ENCODE measurements at regions of chr1 and their contacts with region 1.

Region 1: DNA sequence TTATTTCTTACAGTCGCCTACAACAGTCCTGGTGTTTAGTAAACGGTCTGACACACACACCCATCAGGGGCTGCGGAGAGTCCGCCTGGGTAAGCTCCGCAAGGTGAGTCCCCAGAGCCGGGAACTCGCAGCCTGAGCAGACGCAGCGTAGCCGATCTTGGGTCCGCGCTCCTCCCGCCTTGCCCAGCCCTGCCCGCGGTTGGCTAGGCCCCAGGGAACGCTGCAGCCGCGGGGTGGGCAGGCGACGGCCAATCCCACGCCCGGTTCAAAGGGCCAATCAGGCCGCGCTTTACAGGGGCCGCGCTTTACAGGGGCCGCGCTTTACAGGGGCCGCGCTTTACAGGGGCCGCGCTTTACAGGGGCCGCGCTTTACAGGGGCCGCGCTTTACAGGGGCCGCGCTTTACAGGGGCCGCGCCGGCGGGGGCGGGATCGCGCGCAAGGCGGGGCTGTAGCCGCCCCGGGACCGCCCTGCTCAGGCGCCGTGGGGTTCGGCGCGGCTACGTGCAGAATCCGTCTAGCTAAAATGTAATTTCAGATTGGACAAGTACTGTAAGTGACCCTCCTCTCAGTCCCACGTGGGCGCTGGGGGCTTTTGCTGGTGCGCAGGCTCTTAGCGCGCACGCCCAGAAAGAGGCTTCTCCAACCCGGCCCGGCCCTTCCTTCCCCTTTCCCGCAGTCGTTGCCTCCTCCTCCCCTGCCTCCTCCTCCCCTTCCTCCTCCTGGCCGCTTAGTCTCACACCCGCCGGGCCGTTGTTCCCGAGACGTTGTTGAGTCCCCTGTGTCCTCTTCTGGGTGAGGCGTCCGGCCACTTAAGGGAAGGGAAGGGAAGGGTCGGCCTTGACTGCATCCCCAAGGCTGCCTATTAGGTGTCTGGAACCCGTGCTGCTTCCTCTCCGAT is at the start of gene FGGY:
- DNase-seq: peak; percentile 99
- H3K4me3 ChIP-seq: peak within 1 kb of the TSS; percentile 57 to 68 (median 63)
- H3K27ac ChIP-seq: peak within 1 kb of the TSS; percentile 92 to 98 (median 96)
- H3K4me1 ChIP-seq: peaks cover 18 to 31% (median 28%) of the 10 kb centered on the region in 4 donors
- H3K27me3 ChIP-seq: no peaks in the 10 kb centered on the region
- CTCF ChIP-seq: peak in 1 of 3 experiments; percentile 5
- EP300 ChIP-seq: no peak
- POLR2A ChIP-seq: peak; percentile 88
- total RNA-seq, gene FGGY: 23.3 to 26.4 (median 25.3) TPM

Region 2: GRCh38 chr1:58783993-58784757 is 512.4 kb before region 1 on chr1 and contains the start of gene JUN:
- intact Hi-C with region 1: loop called (anchors 5 kb)
- DNase-seq: peak; percentile 100
- H3K4me3 ChIP-seq: peak within 1 kb of the TSS; percentile 79 to 93 (median 91)
- H3K27ac ChIP-seq: peak within 1 kb of the TSS; percentile 98 to 100 (median 100)
- H3K4me1 ChIP-seq: peaks cover 17 to 30% (median 28%) of the 10 kb centered on the region in 4 donors
- H3K27me3 ChIP-seq: no peaks in the 10 kb centered on the region
- CTCF ChIP-seq: peak in 2 of 3 experiments; percentile 24
- EP300 ChIP-seq: peak; percentile 14
- POLR2A ChIP-seq: peak; percentile 95
- total RNA-seq, gene JUN: 77.7 to 126 (median 111) TPM

Region 3: GRCh38 chr1:58816072-58816746 is 480.4 kb before region 1 on chr1:
- intact Hi-C with region 1: loop called (anchors 10 kb)
- DNase-seq: peak; percentile 95
- H3K4me3 ChIP-seq: peak overlapping the region; percentile 65 to 73 (median 68)
- H3K27ac ChIP-seq: peak overlapping the region; percentile 91 to 96 (median 94)
- H3K4me1 ChIP-seq: peaks cover 27 to 37% (median 34%) of the 10 kb centered on the region in 4 donors
- H3K27me3 ChIP-seq: no peaks in the 10 kb centered on the region
- CTCF ChIP-seq: peak in 2 of 3 experiments; percentile 8 to 22
- EP300 ChIP-seq: peak; percentile 6
- POLR2A ChIP-seq: peak; percentile 26

Region 4: DNA sequence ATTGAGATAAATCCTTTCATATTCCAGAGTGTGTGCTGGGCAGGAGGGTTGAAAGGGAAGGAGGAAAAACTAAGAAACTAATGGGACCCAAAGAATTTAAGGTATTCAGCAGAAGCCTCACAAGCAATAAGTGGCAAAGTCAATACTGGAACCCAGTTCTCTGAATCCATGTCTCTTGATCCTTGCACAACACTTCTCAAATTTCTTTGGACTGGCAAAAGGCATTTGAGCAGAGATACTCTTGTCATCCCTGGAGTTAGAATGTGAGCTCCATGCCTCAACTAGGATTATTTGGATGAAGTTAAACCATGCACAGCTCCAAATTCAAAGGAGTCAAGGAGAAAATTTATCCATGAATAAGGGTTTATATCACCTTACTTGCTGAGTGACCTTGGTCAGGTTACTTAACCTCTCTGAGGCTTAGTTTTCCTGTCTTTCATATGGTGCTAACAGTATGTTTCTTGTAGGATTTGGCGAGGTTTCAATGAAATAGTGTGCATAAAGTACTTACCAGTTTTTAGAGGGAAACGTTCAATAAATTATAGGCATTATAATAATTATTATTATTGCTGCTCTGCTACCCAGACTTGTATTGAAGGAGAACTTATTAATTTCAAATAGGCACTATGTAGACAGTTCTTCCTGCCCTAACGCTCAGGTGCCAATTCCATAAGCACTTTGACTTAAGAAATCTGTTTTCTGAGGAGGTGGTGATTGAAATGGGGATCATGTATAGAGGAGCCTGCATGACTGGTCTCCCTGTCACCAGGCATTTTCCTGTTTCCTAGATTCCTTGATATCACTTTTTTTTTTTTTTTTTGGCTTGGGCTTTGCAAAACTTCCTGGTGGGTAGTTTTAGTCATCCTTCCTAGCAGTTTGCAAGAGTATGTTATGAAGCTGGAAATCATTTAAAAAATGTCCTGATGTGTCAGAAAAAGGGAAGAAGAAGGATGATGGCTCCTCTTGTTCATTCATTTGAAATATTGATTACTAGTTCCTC is 387.7 kb before region 1 on chr1:
- intact Hi-C with region 1: loop called (anchors 5 kb)
- DNase-seq: peak; percentile 5
- H3K4me3 ChIP-seq: no peak overlapping the region
- H3K27ac ChIP-seq: no peak overlapping the region
- H3K4me1 ChIP-seq: peaks cover 0 to 14% (median 8%) of the 10 kb centered on the region in 4 donors
- H3K27me3 ChIP-seq: no peaks in the 10 kb centered on the region
- CTCF ChIP-seq: no peak
- EP300 ChIP-seq: no peak
- POLR2A ChIP-seq: no peak

Region 5: DNA sequence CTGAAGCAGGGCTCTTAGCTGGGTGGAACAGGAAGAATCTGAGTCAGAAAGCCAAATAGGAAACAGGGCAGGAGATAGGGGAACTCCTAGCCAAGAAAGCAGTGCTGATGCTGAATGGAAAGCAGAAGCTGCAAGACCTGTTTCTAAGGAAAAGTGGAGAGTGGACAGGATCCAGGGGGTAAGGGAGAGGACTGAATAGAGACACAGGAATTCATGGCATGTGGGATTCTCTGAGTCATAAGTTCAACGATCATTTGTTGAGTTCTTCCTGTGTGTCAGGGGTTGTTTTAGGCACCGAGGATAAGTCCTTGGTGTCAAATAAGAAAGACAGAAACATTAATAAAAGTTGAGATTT is 153.5 kb before region 1 on chr1:
- intact Hi-C with region 1: loop called (anchors 5 kb)
- DNase-seq: no peak
- H3K4me3 ChIP-seq: no peak overlapping the region
- H3K27ac ChIP-seq: peak overlapping the region; percentile 5 to 31 (median 24)
- H3K4me1 ChIP-seq: peaks cover 19 to 38% (median 31%) of the 10 kb centered on the region in 4 donors
- H3K27me3 ChIP-seq: no peaks in the 10 kb centered on the region
- CTCF ChIP-seq: no peak
- EP300 ChIP-seq: no peak
- POLR2A ChIP-seq: no peak

Region 6: DNA sequence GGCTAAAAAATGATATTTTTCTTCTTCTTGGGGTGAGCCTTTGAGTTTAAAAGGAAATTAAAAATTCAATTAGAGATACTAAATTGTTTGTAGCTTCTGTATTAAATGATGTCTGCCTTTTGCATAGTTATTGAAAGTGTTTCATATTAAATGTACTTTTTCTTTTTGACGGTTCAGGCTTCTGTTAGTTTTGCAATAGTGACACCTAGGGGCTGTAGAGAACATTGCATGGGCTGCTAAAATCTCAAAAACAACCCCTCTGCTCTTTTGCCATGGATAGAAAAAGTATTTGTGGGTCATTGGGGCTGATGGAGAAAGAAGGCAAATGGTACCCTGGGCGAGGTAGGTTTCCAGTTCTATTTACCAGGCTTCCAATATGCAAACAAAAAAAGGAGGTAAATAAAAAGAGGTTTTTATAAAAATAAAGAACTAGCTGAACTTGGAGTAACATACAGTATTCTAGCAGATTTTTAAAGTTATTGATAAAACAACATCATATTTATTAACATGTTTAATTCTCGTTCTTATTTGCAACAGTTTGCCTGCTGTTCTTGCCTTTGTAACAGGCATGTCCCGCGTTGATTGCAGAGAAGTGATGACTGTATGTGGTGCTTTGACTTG is 402.7 kb after region 1 on chr1:
- intact Hi-C with region 1: loop called (anchors 2 kb)
- DNase-seq: no peak
- H3K4me3 ChIP-seq: no peak overlapping the region
- H3K27ac ChIP-seq: peak overlapping the region in 2 of 4 donors; percentile 3 to 30
- H3K4me1 ChIP-seq: peaks cover 20 to 39% (median 32%) of the 10 kb centered on the region in 4 donors
- H3K27me3 ChIP-seq: no peaks in the 10 kb centered on the region
- CTCF ChIP-seq: peak; percentile 96 to 98 (median 97)
- EP300 ChIP-seq: no peak
- POLR2A ChIP-seq: no peak

Region 7: GRCh38 chr1:59759156-59759925 is 462.7 kb after region 1 on chr1:
- intact Hi-C with region 1: loop called (anchors 10 kb)
- DNase-seq: peak; percentile 95
- H3K4me3 ChIP-seq: peak overlapping the region; percentile 32 to 47 (median 39)
- H3K27ac ChIP-seq: peak overlapping the region; percentile 33 to 73 (median 62)
- H3K4me1 ChIP-seq: peaks cover 7 to 14% (median 11%) of the 10 kb centered on the region in 4 donors
- H3K27me3 ChIP-seq: no peaks in the 10 kb centered on the region
- CTCF ChIP-seq: peak; percentile 96 to 99 (median 98)
- EP300 ChIP-seq: no peak
- POLR2A ChIP-seq: no peak